MCF 10A (cell line): ENCODE measurements at regions of chr1 and their contacts with region 1.

Region 1: GRCh38 chr1:16009030-16009709 is 5.1 kb downstream of the SRARP start:
- DNase-seq: peak; percentile 81
- H3K4me3 Mint-ChIP-seq: no peak overlapping the region
- H3K27ac Mint-ChIP-seq: no peak overlapping the region
- H3K4me1 Mint-ChIP-seq: peaks cover 15% of the 10 kb centered on the region
- H3K27me3 Mint-ChIP-seq: no peaks in the 10 kb centered on the region
- CTCF ChIP-seq: peak; percentile 97

Region 2: DNA sequence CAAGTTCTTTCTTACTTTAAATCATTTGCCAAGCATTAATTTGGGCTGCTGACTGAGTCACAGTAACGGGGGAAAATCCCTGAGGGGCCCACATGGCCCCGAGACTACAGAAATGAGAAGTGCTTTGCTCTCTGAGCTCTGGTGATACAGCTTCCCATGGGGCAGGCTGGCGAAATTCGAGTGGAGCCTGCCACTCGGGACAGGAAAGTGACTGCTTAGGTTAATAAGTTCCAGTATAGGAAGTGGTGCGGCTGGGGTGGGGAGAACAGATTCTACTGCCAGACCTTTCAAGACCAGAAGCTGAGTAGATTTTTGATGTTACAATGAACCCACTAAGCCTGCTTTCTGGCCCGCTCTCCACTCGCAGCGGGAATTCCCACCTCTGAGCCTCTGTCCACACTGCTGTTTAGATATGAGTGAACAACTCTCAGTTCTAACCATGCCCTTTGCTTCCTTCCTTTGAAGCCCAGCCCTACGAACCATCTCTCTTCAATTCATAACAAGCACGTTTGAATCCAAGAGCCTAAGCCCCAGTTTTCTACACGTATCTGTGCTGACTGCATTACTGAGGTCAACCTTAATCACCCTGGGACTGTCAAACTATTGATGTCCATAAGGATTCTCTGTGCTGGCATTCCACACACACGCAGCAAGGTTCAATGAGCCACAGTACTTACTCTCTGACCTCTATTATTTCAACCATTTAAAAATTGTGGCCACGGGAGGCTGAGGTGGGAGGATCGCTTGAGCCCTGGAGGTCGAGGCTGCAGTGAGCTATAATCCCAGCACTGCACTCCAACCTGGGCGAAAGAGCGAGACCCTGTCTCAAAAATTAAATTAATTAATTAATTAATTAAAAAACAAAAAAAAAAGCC is 42.9 kb before region 1 on chr1:
- CTCF ChIA-PET with region 1: no interaction called
- POLR2A ChIA-PET with region 1: no interaction called
- intact Hi-C with region 1: no loop called
- DNase-seq: no peak
- H3K4me3 Mint-ChIP-seq: no peak overlapping the region
- H3K27ac Mint-ChIP-seq: peak overlapping the region; percentile 16
- H3K4me1 Mint-ChIP-seq: peaks cover 13% of the 10 kb centered on the region
- H3K27me3 Mint-ChIP-seq: no peaks in the 10 kb centered on the region
- CTCF ChIP-seq: no peak

Region 3: GRCh38 chr1:16032388-16033103 is 23.4 kb after region 1 on chr1:
- CTCF ChIA-PET with region 1: interaction called, 9 read pairs
- POLR2A ChIA-PET with region 1: no interaction called
- intact Hi-C with region 1: loop called (anchors 1 kb)
- DNase-seq: peak; percentile 88
- H3K4me3 Mint-ChIP-seq: no peak overlapping the region
- H3K27ac Mint-ChIP-seq: no peak overlapping the region
- H3K4me1 Mint-ChIP-seq: no peaks in the 10 kb centered on the region
- H3K27me3 Mint-ChIP-seq: peaks cover 11% of the 10 kb centered on the region
- CTCF ChIP-seq: peak; percentile 95

Region 4: GRCh38 chr1:16055613-16056520 is 46.7 kb after region 1 on chr1:
- CTCF ChIA-PET with region 1: interaction called, 45 read pairs
- POLR2A ChIA-PET with region 1: no interaction called
- intact Hi-C with region 1: loop called (anchors 1 kb)
- DNase-seq: peak; percentile 88
- H3K4me3 Mint-ChIP-seq: no peak overlapping the region
- H3K27ac Mint-ChIP-seq: no peak overlapping the region
- H3K4me1 Mint-ChIP-seq: peaks cover 5% of the 10 kb centered on the region
- H3K27me3 Mint-ChIP-seq: peaks cover 9% of the 10 kb centered on the region
- CTCF ChIP-seq: peak; percentile 93